Activated CD4-positive, alpha-beta T cell treated with anti-CD3 and anti-CD28 coated beads for 36 hours (primary cell): ENCODE measurements at regions of chr10 and their contacts with region 1.

Region 1: DNA sequence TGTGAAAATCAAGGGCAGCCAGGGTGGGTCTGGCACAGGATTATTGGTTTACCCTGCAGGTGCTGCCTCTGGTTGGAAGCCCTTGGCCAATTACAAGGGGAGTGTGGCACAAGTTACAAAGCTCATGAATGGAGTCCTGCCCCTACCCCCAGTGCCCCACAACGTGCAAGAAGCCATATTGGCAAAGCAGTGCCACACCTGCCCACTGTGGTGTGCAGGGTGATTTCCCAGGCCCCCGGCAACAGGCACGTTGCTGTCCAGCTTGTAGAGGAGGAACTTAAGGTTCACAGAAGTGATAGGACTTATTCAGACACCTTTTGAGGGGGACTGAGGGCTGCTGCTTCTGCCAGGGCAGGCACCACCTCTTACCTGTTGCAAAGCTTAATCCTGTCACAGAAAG is 11.4 kb downstream of the LHPP start:
- DNase-seq: no peak
- ATAC-seq: no peak
- H3K4me3 Mint-ChIP-seq: no peak overlapping the region
- H3K27ac Mint-ChIP-seq: no peak overlapping the region
- H3K4me1 Mint-ChIP-seq: peaks cover 4% of the 10 kb centered on the region
- H3K27me3 Mint-ChIP-seq: no peaks in the 10 kb centered on the region

Region 2: DNA sequence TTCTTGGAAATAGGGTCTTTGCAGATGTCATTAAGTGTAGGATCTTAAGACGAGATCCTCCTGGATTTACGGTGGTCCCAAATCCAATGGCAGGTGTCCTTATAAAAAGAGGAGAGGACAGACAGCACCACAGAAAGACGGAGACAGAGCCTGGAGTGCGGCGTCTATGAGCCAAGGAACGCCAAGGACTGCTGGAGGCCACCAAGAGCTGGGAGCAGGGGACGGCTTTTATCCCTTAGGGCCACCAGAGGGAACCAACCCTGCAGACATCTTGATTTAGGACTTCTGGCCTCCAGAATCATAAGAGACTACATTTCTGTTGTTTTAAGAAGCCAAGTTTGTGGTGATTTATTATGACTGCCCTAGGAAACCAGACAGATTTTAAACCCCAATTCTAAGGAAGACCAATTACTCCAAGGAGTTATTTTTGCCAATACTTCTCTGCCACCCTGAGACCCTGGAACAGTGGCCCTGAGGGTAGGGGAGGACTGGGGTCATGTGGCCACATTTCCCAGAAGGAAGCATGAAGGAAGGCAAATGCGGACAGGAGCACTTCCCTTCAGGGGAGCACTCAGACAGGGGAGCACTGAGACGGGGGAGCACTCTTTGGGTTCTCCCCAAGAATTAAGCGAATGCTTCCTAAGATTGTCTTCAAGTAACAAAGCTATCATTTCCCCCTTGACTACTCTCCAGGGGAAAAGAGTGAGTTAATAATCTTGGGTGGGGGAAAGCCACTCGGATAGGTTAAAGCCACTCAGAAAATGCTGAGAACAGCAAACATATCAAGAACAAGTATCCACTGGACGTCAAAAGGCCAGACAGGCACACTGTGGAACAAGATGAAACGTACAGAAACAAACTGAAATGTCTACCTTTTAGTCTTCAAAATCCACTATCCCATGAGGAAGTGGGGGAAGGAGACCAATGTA is 447.1 kb before region 1 on chr10:
- CTCF ChIA-PET with region 1: no interaction called
- POLR2A ChIA-PET with region 1: interaction called, 11 read pairs
- intact Hi-C with region 1: no loop called
- DNase-seq: no peak
- ATAC-seq: no peak
- H3K4me3 Mint-ChIP-seq: no peak overlapping the region
- H3K27ac Mint-ChIP-seq: no peak overlapping the region
- H3K4me1 Mint-ChIP-seq: no peaks in the 10 kb centered on the region
- H3K27me3 Mint-ChIP-seq: peaks cover 3% of the 10 kb centered on the region